ENCODE measurements at regions of chr2 and their contacts with region 1.

Region 1: GRCh38 chr2:218710687-218711549 is at the start of gene TTLL4:
- DNase-seq: peak; percentile 99
- total RNA-seq, gene TTLL4: 8.6 TPM

Region 2: GRCh38 chr2:218781691-218782527 is 71.0 kb after region 1 on chr2 and contains the start of gene CYP27A1:
- intact Hi-C with region 1: loop called (anchors 5 kb)
- DNase-seq: peak; percentile 80
- total RNA-seq, gene CYP27A1: 5.2 TPM

Region 3: DNA sequence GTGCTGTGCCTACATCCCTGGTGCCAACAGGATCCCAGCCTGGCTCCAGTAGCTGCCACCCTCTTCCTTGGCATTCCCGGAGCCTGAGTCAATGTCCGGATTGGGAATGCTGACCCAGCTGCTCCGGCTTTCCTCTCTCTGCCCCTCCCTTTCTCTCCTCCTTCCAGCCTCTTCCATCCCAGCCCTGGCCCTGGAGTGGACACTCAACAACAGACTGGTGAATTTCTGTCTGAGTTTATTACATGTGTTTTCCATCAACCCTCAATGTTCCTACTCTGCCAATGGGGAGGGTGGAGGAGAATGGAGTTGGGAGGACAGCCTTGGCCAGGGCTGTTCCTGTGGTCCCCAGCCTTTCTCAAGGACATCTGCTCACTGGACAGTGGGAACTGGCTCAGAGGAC is 121.6 kb after region 1 on chr2:
- intact Hi-C with region 1: loop called (anchors 5 kb)
- DNase-seq: no peak

Region 4: GRCh38 chr2:218849721-218850120 is 138.8 kb after region 1 on chr2:
- intact Hi-C with region 1: loop called (anchors 1 kb)
- DNase-seq: no peak

Region 5: DNA sequence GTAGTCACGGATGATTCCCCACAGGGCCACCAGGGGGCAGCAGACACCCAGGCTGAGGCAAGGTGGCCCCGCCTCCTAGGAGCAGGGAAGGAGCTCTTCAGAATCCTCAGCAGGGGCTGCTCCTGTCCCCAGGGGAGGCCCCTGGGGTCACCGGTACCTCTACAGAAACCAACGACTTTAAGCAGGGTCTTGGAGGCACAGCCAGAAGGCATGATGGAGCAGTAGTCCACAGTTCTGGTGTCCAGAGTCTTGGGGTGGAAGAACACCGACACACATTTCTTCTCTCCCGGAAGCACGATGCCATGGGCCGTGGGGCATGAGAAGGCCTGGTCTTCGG is 318.9 kb after region 1 on chr2:
- intact Hi-C with region 1: no loop called
- DNase-seq: peak; percentile 90